Right ventricle myocardium superior (tissue), 1 donor: ENCODE measurements at regions of chr3 and their contacts with region 1.

Region 1: DNA sequence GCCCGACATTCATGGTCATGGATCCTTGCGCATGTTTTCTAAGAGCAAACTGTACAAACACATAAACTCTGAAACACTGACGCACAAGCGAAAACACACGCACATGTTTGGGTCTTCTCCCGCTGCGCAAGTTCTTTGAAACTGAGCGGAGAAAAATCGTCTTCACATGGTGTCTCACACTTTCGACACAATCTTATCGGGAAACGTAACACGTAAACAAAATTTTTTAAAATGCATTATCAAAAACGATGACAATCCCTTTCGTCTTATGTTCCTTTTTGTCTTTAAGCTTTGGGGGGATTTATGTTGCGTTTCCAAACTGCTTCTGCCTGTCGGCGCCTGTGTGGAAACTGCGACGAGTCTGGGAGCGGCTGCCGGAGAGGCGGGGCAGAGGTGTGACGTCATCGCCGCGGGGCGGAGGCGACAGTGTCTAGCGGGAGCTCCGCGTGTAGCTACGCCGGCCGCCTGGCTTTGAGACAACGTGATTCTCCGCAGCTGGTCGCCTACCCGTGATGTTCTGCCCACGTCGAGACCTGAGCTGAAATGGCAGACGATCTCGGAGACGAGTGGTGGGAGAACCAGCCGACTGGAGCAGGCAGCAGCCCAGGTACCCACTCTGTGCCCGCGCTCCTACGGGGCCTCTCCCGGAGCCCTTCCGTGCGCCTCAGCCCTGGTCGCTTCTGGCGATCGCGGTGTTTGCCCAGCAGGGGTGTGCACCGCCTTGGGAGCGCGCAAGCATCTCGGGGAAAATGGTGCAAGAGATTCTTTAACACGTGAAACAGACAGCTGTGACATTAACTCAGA is at the start of gene CMSS1:
- DNase-seq: peak; percentile 98
- ATAC-seq: peak; percentile 99
- total RNA-seq, gene CMSS1: 36.9 TPM

Region 2: DNA sequence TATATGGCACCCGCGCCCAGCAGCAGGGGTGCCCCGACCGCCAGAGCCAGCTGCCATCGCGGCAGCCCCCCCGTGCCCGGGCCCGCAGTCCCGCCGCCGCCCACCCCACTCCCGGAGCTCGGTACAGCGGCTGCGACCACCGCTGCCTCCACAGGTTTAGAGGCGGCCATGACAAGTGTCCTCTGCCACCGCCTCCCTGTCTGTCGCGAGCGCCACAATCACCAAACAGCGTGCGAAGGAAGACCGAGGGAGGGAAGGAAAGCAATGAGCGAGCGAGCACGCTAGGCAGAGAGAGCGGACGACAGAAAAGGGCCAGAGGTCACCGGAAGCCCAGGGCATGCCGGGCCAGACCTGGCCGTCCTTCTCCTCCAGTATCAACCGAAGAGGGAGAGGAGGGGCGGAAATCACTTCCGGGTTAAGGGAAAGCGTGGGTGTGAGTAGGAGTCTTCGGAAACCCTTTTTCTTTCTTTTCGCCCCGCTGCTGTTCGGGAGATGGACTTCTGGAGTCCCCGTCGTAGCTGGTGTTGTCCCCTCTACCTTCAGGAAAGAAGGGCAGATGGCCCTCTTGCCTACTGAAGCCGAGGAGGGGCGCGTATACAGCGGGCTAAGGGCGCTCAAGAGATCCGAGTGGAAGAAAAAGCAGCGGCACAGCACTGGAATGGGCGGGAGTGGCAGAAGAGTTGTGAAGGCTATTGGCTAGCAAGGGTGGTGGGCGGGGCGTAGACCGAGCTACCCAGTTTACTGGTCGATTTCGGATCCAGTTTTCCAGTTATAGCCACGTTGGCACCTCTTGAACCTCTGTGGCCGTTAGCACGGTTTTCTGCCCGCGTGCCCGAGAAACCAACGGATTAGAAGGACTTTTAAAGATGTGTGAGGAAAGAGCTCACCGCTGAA is 583.4 kb after region 1 on chr3 and contains the starts of genes LNP1 and TOMM70:
- intact Hi-C with region 1: loop called (anchors 10 kb)
- DNase-seq: peak; percentile 99
- ATAC-seq: peak; percentile 97
- total RNA-seq, gene LNP1: 2.6 TPM
- total RNA-seq, gene TOMM70: 63.1 TPM